ENCODE measurements at regions of chr1 and their contacts with region 1.

Region 1: GRCh38 chr1:156797212-156797871 is 19.3 kb downstream of the SH2D2A start:
- DNase-seq: peak; percentile 68 to 75
- ATAC-seq: peak; percentile 89 to 91
- H3K4me3 ChIP-seq: no peak overlapping the region
- H3K27ac ChIP-seq: no peak overlapping the region
- H3K4me1 ChIP-seq: no peaks in the 10 kb centered on the region
- CTCF ChIP-seq: peak; percentile 87
- EP300 ChIP-seq: no peak
- POLR2A ChIP-seq: no peak
- RAD21 ChIP-seq: peak; percentile 72 to 78

Region 2: DNA sequence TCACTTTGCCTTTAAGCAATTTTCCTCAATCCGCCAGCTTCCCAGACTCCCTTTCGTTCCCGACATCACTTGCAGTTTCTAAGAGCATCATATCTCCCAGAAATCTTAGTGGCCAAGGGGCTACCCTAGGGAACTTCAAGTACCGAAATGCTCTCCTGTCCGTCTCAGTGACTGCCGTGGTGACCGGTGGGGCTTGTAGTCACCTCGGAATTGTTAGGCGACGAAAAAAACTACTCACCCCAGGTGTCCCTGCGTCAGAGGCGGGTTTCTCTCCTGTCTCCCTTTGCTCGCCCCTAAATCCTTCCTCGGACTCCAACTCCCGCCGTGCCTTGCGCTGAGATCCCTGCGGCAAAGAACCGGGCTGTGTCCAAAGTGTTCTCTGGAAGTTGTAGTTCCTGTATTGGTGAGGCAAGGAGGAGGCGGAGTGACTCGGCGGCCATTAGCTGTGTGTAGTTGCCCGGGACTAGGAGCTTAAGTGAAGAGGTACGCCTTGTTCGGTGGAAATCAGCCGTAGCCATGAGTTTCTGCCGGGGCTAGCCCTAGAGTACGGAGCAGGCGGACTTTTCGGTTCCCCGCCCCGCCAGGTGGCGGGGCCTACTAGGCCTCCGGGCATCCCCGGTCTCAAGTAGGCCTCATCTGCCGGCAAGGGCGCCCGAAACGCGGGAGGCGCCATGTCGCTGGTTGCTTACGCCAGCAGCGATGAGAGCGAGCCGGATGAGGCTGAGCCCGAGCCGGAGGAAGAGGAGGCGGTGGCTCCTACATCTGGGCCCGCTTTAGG is 30.1 kb before region 1 on chr1 and contains the start of gene PRCC:
- CTCF ChIA-PET with region 1: interaction called, 11 read pairs
- POLR2A ChIA-PET with region 1: no interaction called
- DNase-seq: peak; percentile 90 to 100
- ATAC-seq: peak; percentile 97
- H3K4me3 ChIP-seq: peak within 1 kb of the TSS; percentile 83
- H3K27ac ChIP-seq: peak within 1 kb of the TSS; percentile 91 to 94
- H3K4me1 ChIP-seq: peaks cover 24% of the 10 kb centered on the region
- CTCF ChIP-seq: no peak
- EP300 ChIP-seq: no peak
- POLR2A ChIP-seq: peak; percentile 22
- RAD21 ChIP-seq: no peak
- polyA plus RNA-seq, gene PRCC: 52.0 and 65.3 TPM in 2 replicates

Region 3: DNA sequence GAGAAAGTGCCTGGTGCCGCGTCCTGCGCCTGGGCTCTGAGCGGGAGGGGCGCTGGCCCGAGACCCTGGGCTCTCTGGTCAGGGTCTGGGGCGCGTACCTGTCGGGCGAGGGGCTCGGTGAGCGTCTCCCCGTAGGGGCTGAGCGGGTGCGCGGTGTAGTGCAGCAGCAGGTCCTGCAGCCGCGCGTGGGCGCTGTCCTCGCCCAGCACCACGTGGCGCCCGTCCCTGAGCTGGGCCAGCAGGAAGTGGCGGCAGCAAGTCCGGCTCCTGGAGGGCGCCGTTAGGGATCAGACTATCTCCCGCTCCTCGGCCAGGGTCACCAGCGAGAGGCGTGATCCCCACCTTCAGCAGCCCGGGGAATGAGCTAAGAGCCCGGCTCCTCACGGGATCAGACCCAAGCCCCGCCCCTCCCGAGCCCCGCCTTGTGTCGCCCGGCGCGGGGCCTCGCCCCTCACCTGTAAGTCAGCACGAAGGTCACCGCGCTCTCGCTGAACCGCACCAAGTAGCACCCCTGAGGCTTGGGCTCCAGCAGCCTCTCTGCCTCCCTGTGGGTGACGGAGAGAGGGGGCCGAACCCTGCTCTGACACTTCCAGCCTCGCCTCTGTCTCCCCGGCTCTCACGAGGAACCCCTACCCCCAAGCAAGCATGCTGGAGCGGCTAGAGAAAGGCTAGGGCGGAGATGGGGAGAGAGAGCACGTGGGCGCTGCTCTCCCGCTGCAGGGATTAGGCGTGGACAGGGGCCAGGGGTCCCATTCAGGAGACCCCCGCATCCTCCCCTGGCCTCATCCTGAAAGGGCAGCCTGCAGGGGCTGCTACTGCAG is 16.6 kb after region 1 on chr1:
- CTCF ChIA-PET with region 1: interaction called, 38 read pairs
- POLR2A ChIA-PET with region 1: no interaction called
- DNase-seq: peak; percentile 73
- ATAC-seq: peak; percentile 83 to 91
- H3K4me3 ChIP-seq: peak overlapping the region; percentile 39
- H3K27ac ChIP-seq: peak overlapping the region; percentile 76 to 86
- H3K4me1 ChIP-seq: peaks cover 24% of the 10 kb centered on the region
- CTCF ChIP-seq: peak; percentile 59
- EP300 ChIP-seq: no peak
- POLR2A ChIP-seq: peak; percentile 60
- RAD21 ChIP-seq: peak; percentile 13 to 34; a peak in 2 of 5 replicates

Region 4: DNA sequence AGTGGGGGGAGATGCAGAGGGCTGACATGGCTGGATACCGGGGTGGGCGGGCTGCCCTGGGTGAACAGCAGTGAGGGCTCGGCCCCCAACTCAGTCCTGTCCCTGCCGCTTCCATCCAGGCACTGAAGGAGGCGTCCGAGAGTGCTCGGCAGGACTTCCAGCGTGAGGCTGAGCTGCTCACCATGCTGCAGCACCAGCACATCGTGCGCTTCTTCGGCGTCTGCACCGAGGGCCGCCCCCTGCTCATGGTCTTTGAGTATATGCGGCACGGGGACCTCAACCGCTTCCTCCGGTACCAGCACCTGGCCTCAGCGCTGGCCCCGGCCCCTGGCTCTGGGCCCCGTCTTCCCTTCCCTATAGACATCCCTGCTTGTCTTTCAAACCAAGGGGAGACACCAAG is 78.9 kb after region 1 on chr1:
- CTCF ChIA-PET with region 1: interaction called, 14 read pairs
- POLR2A ChIA-PET with region 1: no interaction called
- DNase-seq: no peak
- ATAC-seq: peak in 1 of 2 experiments; percentile 52; a peak in 3 of 6 replicates
- H3K4me3 ChIP-seq: no peak overlapping the region
- H3K27ac ChIP-seq: no peak overlapping the region
- H3K4me1 ChIP-seq: peaks cover under 1% of the 10 kb centered on the region; the same call in 1 of the 3 replicates
- CTCF ChIP-seq: no peak
- EP300 ChIP-seq: no peak
- POLR2A ChIP-seq: no peak
- RAD21 ChIP-seq: no peak

Region 5: GRCh38 chr1:156927215-156928042 is 130.1 kb after region 1 on chr1:
- CTCF ChIA-PET with region 1: interaction called, 24 read pairs
- POLR2A ChIA-PET with region 1: no interaction called
- DNase-seq: peak; percentile 84 to 87
- ATAC-seq: peak; percentile 85 to 94
- H3K4me3 ChIP-seq: peak overlapping the region; percentile 46
- H3K27ac ChIP-seq: peak overlapping the region; percentile 61 to 82; a peak in 5 of 6 replicates
- H3K4me1 ChIP-seq: peaks cover 7% of the 10 kb centered on the region; the same call in 1 of the 3 replicates
- CTCF ChIP-seq: peak; percentile 82
- EP300 ChIP-seq: no peak
- POLR2A ChIP-seq: no peak
- RAD21 ChIP-seq: peak; percentile 90 to 92